Natural killer cell (primary cell): ENCODE measurements at regions of chr9 and their contacts with region 1.

Region 1: DNA sequence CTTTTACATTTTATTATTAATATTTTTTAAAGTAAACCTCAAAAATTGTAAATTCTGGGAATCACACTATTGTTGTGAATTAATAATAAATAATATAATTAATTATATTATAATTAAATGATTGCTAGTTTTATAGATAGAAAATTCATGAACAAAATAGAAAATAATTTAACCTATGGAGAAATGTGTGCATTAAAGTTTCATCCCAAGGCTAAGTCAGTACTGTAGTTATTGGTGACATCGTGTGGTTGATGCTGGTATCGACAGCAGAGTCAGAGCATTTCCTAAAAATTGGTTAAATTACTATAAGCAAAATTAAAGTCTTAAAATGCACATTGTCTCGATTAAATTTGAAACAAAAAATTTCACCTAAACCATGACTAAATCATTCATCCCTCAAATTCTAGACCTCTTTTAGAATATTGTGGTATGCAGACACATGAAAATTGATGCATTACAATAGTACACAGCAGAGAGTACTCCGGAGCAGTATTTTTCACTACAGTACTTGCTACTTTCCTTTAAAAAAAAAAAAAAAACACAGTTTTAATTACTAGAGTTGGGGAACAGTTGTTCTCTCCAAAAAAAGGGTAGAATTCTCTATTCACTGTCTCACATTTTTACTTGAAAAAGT is 73.9 kb downstream of the RORB start:
- DNase-seq: peak in 1 of 2 donors; percentile 40
- ATAC-seq: peak in 2 of 3 donors; percentile 48 to 49
- H3K4me3 ChIP-seq: no peak overlapping the region
- H3K4me3 Mint-ChIP-seq: no peak overlapping the region
- H3K27ac ChIP-seq: no peak overlapping the region
- H3K27ac Mint-ChIP-seq: no peak overlapping the region
- H3K4me1 ChIP-seq: no peaks in the 10 kb centered on the region
- H3K4me1 Mint-ChIP-seq: no peaks in the 10 kb centered on the region
- H3K27me3 ChIP-seq: no peaks in the 10 kb centered on the region
- H3K27me3 Mint-ChIP-seq: no peaks in the 10 kb centered on the region
- CTCF ChIP-seq: peak; percentile 70

Region 2: DNA sequence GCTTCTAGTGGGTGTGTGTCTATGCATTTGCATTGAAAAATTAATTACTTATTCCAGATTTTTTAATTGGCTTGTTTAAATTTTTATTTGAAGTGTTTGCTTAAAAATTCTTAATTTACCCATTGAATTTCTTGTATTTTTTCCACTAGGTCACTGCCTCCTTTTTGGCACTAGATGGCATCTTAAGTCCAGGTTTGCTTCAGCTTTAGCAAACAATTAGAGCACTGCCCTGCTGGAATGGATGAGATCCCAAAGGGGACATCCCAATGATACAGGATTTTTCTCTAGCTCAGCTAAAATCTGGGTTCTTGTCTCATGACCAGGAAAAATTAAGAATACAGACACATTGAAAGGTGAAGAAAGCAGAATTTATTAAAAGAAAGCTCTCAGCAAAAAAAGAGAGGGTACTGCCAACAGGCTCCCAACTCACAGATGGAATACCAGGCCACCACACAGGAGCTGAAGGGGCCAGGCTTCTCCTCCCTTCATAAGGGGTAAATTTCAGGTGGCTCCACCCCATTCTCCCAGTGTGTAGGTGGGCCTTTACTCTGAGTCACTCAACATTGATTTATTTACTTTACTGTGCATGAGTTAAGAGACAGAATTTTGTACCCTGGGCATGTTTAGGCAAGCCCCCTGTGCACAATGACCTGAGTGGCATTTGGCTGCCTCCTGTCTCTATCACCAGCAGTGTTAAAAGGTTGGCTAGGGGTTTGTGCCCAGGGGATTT is 887.0 kb before region 1 on chr9:
- intact Hi-C with region 1: loop called (anchors 1 kb)
- DNase-seq: peak in 1 of 2 donors; percentile 16
- ATAC-seq: no peak
- H3K4me3 ChIP-seq: no peak overlapping the region
- H3K4me3 Mint-ChIP-seq: no peak overlapping the region
- H3K27ac ChIP-seq: no peak overlapping the region
- H3K27ac Mint-ChIP-seq: no peak overlapping the region
- H3K4me1 ChIP-seq: no peaks in the 10 kb centered on the region
- H3K4me1 Mint-ChIP-seq: no peaks in the 10 kb centered on the region
- H3K27me3 ChIP-seq: no peaks in the 10 kb centered on the region
- H3K27me3 Mint-ChIP-seq: no peaks in the 10 kb centered on the region
- CTCF ChIP-seq: peak; percentile 56